Sciatic nerve (tissue), 2 donors: ENCODE measurements at regions of chr2 and their contacts with region 1.

Region 1: DNA sequence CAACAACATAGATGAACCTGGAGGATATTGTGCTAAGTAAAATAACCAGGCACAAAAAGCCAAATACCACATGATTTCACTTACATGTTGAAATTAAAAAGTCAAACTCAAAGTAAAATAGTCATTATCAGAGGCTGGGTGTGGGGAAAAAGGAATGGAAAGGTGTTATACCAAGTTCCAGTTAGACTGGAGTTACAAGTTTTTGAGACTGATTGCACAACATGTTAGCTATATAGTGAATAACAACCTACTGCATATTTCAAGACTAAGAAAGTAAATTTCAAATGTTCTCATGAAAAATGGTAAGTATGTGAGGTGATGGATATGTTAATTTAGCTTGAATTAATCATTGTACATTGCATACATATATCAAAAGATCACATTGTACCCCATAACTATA is 116.8 kb upstream of the HNMT start:
- DNase-seq: no peak
- ATAC-seq: no peak

Region 2: GRCh38 chr2:136423516-136423996 is 1423.9 kb before region 1 on chr2:
- intact Hi-C with region 1: loop called (anchors 10 kb)
- DNase-seq: peak; percentile 85
- ATAC-seq: peak; percentile 95